WTC11 (cell line): ENCODE measurements at regions of chr7 and their contacts with region 1.

Region 1: DNA sequence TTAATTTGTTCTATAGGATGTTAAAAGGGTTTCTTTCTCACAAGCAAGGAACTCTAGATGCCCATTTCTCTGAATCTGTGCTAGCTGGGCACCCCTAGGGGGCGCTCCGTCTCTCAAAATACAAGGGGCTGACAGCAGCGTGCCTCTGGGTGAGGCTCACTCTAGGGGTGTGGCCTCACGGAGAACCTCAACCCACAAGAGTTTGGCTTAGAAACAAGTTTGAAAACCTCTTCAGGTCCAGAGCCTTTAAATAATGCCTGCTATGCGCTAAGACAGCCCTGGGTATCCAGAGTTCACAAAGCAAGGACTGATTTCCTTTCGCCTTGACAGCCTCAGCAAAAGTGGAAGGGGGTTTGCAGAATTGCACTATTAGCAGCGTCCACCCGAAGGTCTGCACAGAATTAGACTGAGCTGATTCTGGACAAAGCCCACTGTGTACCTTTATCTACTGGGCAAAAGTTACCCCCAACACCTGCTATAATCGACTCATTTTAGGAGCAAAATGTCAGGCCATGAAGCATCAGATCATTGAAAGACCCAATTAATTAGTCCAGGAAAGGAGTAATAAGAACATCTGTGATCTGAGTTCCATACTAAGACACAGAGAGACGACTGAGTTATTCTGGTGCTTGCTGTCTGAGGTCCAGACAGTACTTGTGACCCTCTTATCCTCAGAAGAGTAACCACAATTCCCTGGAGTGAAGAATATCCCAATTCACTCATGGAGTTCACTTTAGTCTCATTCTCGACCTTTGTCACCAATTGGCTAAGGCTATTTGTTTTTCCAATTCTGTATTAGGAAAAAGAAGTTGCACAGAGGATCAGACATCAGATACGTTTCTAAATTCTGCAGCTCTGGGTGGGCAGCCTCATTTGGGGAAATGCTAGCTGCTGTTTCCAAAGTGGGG is 574 bp upstream of the CPED1 start:
- DNase-seq: peak; percentile 82
- ATAC-seq: peak; percentile 92
- H3K4me3 Mint-ChIP-seq: peak overlapping the region; percentile 78
- H3K27ac Mint-ChIP-seq: no peak overlapping the region
- H3K4me1 Mint-ChIP-seq: peaks cover 11% of the 10 kb centered on the region
- H3K27me3 Mint-ChIP-seq: peaks cover 25% of the 10 kb centered on the region
- CTCF ChIP-seq: peak; percentile 89

Region 2: DNA sequence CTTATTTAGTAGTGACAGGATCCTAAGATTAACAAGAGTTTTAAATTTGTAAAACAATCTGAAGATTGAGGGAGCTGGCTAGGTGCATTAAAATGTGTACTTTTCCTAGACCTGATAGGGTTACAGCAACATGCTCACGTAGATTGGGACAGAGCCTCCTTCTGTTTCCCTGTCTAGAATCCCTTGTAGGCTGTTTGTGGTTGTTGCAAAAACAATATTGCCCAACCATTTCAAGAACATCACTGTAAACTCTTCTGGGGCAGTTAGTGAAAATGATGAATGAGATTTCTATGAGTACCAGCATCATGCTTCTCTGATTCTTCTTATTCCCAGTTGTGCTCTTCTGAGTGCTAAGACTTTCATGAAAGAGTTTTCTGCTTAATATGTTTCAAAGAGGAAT is 14.1 kb before region 1 on chr7:
- CTCF ChIA-PET with region 1: no interaction called
- POLR2A ChIA-PET with region 1: no interaction called
- DNase-seq: no peak
- ATAC-seq: no peak
- H3K4me3 Mint-ChIP-seq: no peak overlapping the region
- H3K27ac Mint-ChIP-seq: no peak overlapping the region
- H3K4me1 Mint-ChIP-seq: no peaks in the 10 kb centered on the region
- H3K27me3 Mint-ChIP-seq: no peaks in the 10 kb centered on the region
- CTCF ChIP-seq: no peak

Region 3: DNA sequence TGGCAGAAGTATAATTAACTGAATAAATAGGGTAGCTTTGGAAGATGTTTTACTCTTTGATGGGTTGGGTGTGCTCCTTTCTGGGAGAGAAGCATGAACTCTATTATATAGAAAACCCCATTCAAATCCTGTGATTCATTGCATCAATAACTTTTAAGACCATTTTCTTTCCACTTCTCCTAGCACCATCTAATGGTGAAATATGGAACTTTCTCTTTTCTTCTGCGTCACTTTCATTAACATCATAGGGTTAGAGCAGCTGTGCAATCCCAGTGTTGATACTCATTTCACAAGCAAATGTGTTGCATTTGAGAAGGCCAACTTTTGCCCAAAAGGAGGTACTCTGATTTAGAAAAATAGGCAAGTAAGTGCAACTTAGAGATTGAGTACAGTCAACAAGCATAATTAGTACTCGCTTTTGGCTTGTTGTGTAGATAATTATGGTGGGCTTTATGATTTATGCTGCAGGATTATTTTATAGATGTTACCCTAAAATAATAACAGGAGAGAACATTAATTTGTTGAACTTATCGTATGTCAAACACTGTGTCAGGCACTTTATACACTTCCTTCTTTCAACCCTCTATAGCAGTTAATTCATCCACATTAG is 93.5 kb after region 1 on chr7:
- CTCF ChIA-PET with region 1: interaction called, 50 read pairs
- POLR2A ChIA-PET with region 1: no interaction called
- DNase-seq: no peak
- ATAC-seq: peak; percentile 66
- H3K4me3 Mint-ChIP-seq: no peak overlapping the region
- H3K27ac Mint-ChIP-seq: no peak overlapping the region
- H3K4me1 Mint-ChIP-seq: no peaks in the 10 kb centered on the region
- H3K27me3 Mint-ChIP-seq: no peaks in the 10 kb centered on the region
- CTCF ChIP-seq: peak; percentile 47

Region 4: GRCh38 chr7:121107923-121108498 is 120.1 kb after region 1 on chr7:
- CTCF ChIA-PET with region 1: interaction called, 28 read pairs
- POLR2A ChIA-PET with region 1: no interaction called
- DNase-seq: no peak
- ATAC-seq: peak; percentile 88
- H3K4me3 Mint-ChIP-seq: no peak overlapping the region
- H3K27ac Mint-ChIP-seq: no peak overlapping the region
- H3K4me1 Mint-ChIP-seq: peaks cover 16% of the 10 kb centered on the region
- H3K27me3 Mint-ChIP-seq: no peaks in the 10 kb centered on the region
- CTCF ChIP-seq: peak; percentile 69

Region 5: GRCh38 chr7:121180436-121181063 is 192.6 kb after region 1 on chr7:
- CTCF ChIA-PET with region 1: no interaction called
- POLR2A ChIA-PET with region 1: no interaction called
- DNase-seq: no peak
- ATAC-seq: no peak
- H3K4me3 Mint-ChIP-seq: no peak overlapping the region
- H3K27ac Mint-ChIP-seq: no peak overlapping the region
- H3K4me1 Mint-ChIP-seq: no peaks in the 10 kb centered on the region
- H3K27me3 Mint-ChIP-seq: no peaks in the 10 kb centered on the region
- CTCF ChIP-seq: no peak